ENCODE measurements at regions of chr11 and their contacts with region 1.

Region 1: GRCh38 chr11:7138051-7138450 is 49.3 kb downstream of the RBMXL2 start:
- DNase-seq: no peak
- H3K4me3 ChIP-seq: no peak overlapping the region
- H3K27ac ChIP-seq: no peak overlapping the region
- H3K4me1 ChIP-seq: no peaks in the 10 kb centered on the region
- H3K27me3 ChIP-seq: no peaks in the 10 kb centered on the region
- CTCF ChIP-seq: no peak
- POLR2A ChIP-seq: no peak

Region 2: DNA sequence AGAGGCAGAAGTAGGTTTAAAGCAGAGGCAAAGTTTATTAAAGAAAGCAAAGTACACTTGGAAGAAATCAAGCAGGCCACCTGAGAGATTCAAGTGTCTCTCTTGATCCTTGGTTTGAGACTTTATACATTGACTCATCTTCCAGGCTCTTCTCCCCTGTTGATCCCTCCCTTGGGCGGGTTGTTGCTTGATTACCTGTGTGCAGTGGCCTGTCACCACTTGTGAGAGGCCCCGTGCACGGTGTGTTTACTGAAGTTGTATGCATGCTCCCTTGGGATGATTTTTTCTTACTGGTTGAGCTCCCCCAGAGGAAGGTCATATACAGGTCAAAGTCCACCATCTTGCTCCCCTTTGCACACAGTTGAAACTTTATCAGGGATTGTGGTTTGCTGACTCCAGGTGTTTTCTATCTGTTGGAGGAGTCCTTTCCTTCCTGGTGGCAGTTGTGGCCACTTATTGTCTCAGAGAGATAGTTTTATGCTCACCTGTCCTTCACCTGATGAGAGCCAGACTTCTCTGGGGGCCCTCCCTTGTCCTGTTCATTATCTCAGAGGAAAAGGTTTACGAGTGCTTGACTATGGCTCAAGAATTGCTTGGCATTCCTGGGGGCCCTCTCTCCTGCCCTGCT is 65.5 kb before region 1 on chr11:
- CTCF ChIA-PET with region 1: no interaction called
- POLR2A ChIA-PET with region 1: no interaction called
- dilution Hi-C with region 1: no loop called
- intact Hi-C with region 1: no loop called
- DNase-seq: no peak
- H3K4me3 ChIP-seq: no peak overlapping the region
- H3K27ac ChIP-seq: no peak overlapping the region
- H3K4me1 ChIP-seq: no peaks in the 10 kb centered on the region
- H3K27me3 ChIP-seq: no peaks in the 10 kb centered on the region
- CTCF ChIP-seq: no peak
- POLR2A ChIP-seq: no peak

Region 3: GRCh38 chr11:7196396-7197146 is 58.5 kb after region 1 on chr11:
- CTCF ChIA-PET with region 1: no interaction called
- POLR2A ChIA-PET with region 1: no interaction called
- dilution Hi-C with region 1: no loop called
- intact Hi-C with region 1: loop called (anchors 10 kb)
- DNase-seq: no peak
- H3K4me3 ChIP-seq: no peak overlapping the region
- H3K27ac ChIP-seq: no peak overlapping the region
- H3K4me1 ChIP-seq: no peaks in the 10 kb centered on the region
- H3K27me3 ChIP-seq: peaks cover 0 to 2% of the 10 kb centered on the region in 2 experiments
- CTCF ChIP-seq: no peak
- POLR2A ChIP-seq: no peak

Measured in endothelial cell of umbilical vein (primary cell).